Sigmoid colon (tissue), 7 donors: ENCODE measurements at regions of chr1 and their contacts with region 1.

Region 1: GRCh38 chr1:240189386-240189989 is 97.8 kb downstream of the FMN2 start:
- DNase-seq: no peak
- H3K4me3 ChIP-seq: no peak overlapping the region
- H3K27ac ChIP-seq: no peak overlapping the region
- H3K4me1 ChIP-seq: peaks cover 0 to 26% (median 14%) of the 10 kb centered on the region in 4 donors
- H3K27me3 ChIP-seq: no peaks in the 10 kb centered on the region
- CTCF ChIP-seq: peak; percentile 34 to 77 (median 68)
- EP300 ChIP-seq: no peak
- POLR2A ChIP-seq: no peak

Region 2: DNA sequence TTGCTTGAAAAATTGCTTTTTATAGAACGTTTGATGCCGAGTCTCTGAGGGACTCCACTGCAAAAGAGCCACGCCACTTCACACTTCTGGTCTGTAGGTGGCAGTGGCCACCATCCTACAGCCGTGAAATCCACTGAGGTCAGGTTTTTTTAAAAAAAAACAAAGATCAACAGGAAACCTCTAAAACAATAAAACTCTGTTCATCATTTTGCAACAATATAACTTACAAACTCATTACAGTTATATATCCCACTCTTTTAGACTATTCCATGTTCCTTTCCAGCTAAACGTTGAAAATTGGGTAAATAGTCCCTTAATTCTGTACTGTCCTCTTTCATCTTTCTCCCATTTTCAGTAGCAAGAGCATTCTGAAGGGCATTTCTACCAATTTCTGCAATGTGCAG is 162.4 kb before region 1 on chr1:
- intact Hi-C with region 1: loop called (anchors 1 kb)
- DNase-seq: no peak
- H3K4me3 ChIP-seq: no peak overlapping the region
- H3K27ac ChIP-seq: no peak overlapping the region
- H3K4me1 ChIP-seq: peaks cover 0 to 6% (median 0%) of the 10 kb centered on the region in 4 donors
- H3K27me3 ChIP-seq: no peaks in the 10 kb centered on the region
- CTCF ChIP-seq: peak; percentile 59 to 85 (median 78)
- EP300 ChIP-seq: no peak
- POLR2A ChIP-seq: no peak

Region 3: DNA sequence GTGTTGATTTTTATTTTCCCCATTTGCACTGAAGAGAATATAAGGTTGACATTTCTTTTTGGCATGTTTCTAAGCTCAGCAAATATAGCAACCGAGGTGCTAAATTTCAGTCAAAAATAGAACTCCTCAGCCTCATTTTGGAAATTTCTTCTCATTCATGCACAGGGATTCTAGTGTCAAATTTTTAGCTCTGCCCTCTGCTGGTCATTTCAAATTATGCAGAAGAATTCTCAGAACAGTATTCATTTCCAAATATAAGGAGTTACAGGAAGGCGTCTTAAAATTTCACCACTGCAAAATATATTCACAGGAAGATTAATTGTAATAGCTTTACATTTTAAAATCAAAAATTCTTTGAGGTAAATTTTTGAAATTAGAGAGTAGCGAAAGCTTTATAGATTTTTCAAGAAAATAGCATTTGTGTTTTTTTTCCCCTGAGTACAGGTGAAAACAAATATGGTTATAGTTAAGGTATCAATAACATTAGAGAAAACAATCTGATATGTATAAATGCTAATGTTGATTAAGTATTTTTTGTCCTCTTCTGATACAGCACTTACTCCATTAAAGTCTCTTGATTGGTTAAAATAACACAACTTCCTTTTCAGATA is 39.9 kb before region 1 on chr1:
- intact Hi-C with region 1: loop called (anchors 5 kb)
- DNase-seq: no peak
- H3K4me3 ChIP-seq: no peak overlapping the region
- H3K27ac ChIP-seq: no peak overlapping the region
- H3K4me1 ChIP-seq: no peaks in the 10 kb centered on the region
- H3K27me3 ChIP-seq: no peaks in the 10 kb centered on the region
- CTCF ChIP-seq: peak in 3 of 4 experiments; percentile 56 to 68 (median 57)
- EP300 ChIP-seq: no peak
- POLR2A ChIP-seq: no peak

Region 4: GRCh38 chr1:240164742-240165141 is 24.7 kb before region 1 on chr1:
- intact Hi-C with region 1: no loop called
- DNase-seq: no peak
- H3K4me3 ChIP-seq: no peak overlapping the region
- H3K27ac ChIP-seq: no peak overlapping the region
- H3K4me1 ChIP-seq: peaks cover 0 to 5% (median 0%) of the 10 kb centered on the region in 4 donors
- H3K27me3 ChIP-seq: no peaks in the 10 kb centered on the region
- CTCF ChIP-seq: no peak
- EP300 ChIP-seq: no peak
- POLR2A ChIP-seq: no peak

Region 5: GRCh38 chr1:240526312-240526711 is 336.8 kb after region 1 on chr1:
- intact Hi-C with region 1: loop called (anchors 10 kb)
- DNase-seq: no peak
- H3K4me3 ChIP-seq: no peak overlapping the region
- H3K27ac ChIP-seq: no peak overlapping the region
- H3K4me1 ChIP-seq: peaks cover 0 to 36% (median 8%) of the 10 kb centered on the region in 4 donors
- H3K27me3 ChIP-seq: no peaks in the 10 kb centered on the region
- CTCF ChIP-seq: no peak
- EP300 ChIP-seq: no peak
- POLR2A ChIP-seq: no peak

Region 6: GRCh38 chr1:240691521-240692338 is 502.2 kb after region 1 on chr1:
- intact Hi-C with region 1: loop called (anchors 1 kb)
- DNase-seq: peak; percentile 69
- H3K4me3 ChIP-seq: peak overlapping the region in 2 of 4 donors; percentile 12 to 15
- H3K27ac ChIP-seq: peak overlapping the region; percentile 14 to 72 (median 67)
- H3K4me1 ChIP-seq: peaks cover 0 to 36% (median 33%) of the 10 kb centered on the region in 4 donors
- H3K27me3 ChIP-seq: no peaks in the 10 kb centered on the region
- CTCF ChIP-seq: peak; percentile 69 to 88 (median 74)
- EP300 ChIP-seq: no peak
- POLR2A ChIP-seq: no peak